Ascending aorta (tissue), 2 donors: ENCODE measurements at regions of chr15 and their contacts with region 1.

Region 1: DNA sequence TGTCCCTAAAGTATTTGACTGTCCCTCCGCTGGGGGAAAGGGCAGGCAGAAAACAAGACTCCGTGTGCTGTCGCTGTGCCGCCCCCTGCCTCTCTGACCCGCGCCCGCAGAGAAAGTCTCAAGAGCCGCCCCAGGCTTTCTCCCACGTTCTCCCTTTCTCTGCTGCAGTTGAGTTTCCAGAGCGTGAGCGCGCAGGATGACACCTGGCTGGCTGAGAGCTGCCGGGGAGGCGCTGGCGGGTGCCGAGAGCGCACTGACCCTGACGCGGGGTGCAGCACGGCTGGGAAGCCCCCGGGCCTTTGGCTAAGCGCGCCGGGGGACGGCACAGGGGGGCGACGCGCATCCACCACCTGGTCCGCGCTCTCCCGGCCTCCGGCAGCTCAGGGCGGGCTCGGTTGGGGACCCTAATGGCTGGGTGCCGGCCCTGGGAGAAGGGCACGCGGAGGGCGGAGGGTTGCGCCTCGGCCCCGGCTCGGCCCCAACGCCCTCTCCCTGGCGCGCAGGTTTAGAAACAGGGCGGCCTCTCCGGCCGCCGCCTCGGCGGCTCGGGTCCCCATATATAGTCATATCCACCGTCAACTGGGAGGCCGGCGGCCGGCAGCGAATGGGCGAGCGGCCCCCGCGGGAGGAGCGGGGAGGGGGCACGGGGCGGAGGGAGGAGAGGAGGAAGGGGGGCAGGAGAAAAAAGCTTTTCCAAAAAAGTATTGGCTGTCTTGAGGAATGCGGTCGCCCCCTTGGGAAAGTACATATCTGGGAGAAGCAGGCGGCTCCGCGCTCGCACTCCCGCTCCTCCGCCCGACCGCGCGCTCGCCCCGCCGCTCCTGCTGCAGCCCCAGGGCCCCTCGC is at the start of gene TPM1:
- DNase-seq: peak; percentile 62 to 95
- H3K4me3 ChIP-seq: peak within 1 kb of the TSS; percentile 76 to 85
- H3K27ac ChIP-seq: peak within 1 kb of the TSS; percentile 86 to 98
- H3K4me1 ChIP-seq: peaks cover 0 to 14% of the 10 kb centered on the region in 2 donors
- H3K27me3 ChIP-seq: no peaks in the 10 kb centered on the region
- CTCF ChIP-seq: peak in 1 of 3 experiments; percentile 34
- total RNA-seq, gene TPM1: 813 TPM

Region 2: GRCh38 chr15:62896978-62897647 is 145.1 kb before region 1 on chr15:
- intact Hi-C with region 1: loop called (anchors 1 kb)
- DNase-seq: peak; percentile 75 to 97
- H3K4me3 ChIP-seq: peak overlapping the region in 1 of 2 donors; percentile 19
- H3K27ac ChIP-seq: peak overlapping the region; percentile 72 to 81
- H3K4me1 ChIP-seq: peaks cover 8 to 36% of the 10 kb centered on the region in 2 donors
- H3K27me3 ChIP-seq: no peaks in the 10 kb centered on the region
- CTCF ChIP-seq: no peak

Region 3: GRCh38 chr15:62940755-62941361 is 101.3 kb before region 1 on chr15:
- intact Hi-C with region 1: loop called (anchors 5 kb)
- DNase-seq: peak; percentile 68 to 94
- H3K4me3 ChIP-seq: no peak overlapping the region
- H3K27ac ChIP-seq: peak overlapping the region; percentile 81 to 92
- H3K4me1 ChIP-seq: peaks cover 16 to 17% of the 10 kb centered on the region in 2 donors
- H3K27me3 ChIP-seq: no peaks in the 10 kb centered on the region
- CTCF ChIP-seq: no peak

Region 4: GRCh38 chr15:63013052-63013808 is 29.0 kb before region 1 on chr15:
- intact Hi-C with region 1: loop called (anchors 2 kb)
- DNase-seq: no peak
- H3K4me3 ChIP-seq: no peak overlapping the region
- H3K27ac ChIP-seq: peak overlapping the region; percentile 73 to 74
- H3K4me1 ChIP-seq: peaks cover 2 to 28% of the 10 kb centered on the region in 2 donors
- H3K27me3 ChIP-seq: no peaks in the 10 kb centered on the region
- CTCF ChIP-seq: no peak

Region 5: GRCh38 chr15:63504247-63504978 is 462.2 kb after region 1 on chr15 and contains the start of gene USP3:
- intact Hi-C with region 1: loop called (anchors 5 kb)
- DNase-seq: peak; percentile 86 to 98
- H3K4me3 ChIP-seq: peak within 1 kb of the TSS; percentile 93 to 94
- H3K27ac ChIP-seq: peak within 1 kb of the TSS; percentile 98 to 99
- H3K4me1 ChIP-seq: peaks cover 6 to 55% of the 10 kb centered on the region in 2 donors
- H3K27me3 ChIP-seq: no peaks in the 10 kb centered on the region
- CTCF ChIP-seq: peak; percentile 56 to 63 (median 60)
- total RNA-seq, gene USP3: 61.9 TPM